T-cell (primary cell): ENCODE measurements at regions of chr11 and their contacts with region 1.

Region 1: GRCh38 chr11:128630367-128631230 is 43.2 kb upstream of the ETS1 start:
- DNase-seq: peak; percentile 71 to 97 (median 89)
- ATAC-seq: peak; percentile 73 to 84 (median 78)
- H3K4me3 ChIP-seq: no peak overlapping the region
- H3K4me3 Mint-ChIP-seq: peak overlapping the region; percentile 46 to 70 (median 53)
- H3K27ac ChIP-seq: peak overlapping the region; percentile 78
- H3K27ac Mint-ChIP-seq: peak overlapping the region; percentile 99 to 100
- H3K4me1 ChIP-seq: peaks cover 53 to 57% of the 10 kb centered on the region in 2 experiments
- H3K4me1 Mint-ChIP-seq: peaks cover 65 to 71% (median 68%) of the 10 kb centered on the region in 3 donors
- H3K27me3 ChIP-seq: no peaks in the 10 kb centered on the region
- H3K27me3 Mint-ChIP-seq: no peaks in the 10 kb centered on the region

Region 2: GRCh38 chr11:128190312-128190711 is 440.3 kb before region 1 on chr11:
- CTCF ChIA-PET with region 1: interaction called, 5 to 17 read pairs
- POLR2A ChIA-PET with region 1: no interaction called
- DNase-seq: peak in 25 of 35 experiments; percentile 4 to 74 (median 32)
- ATAC-seq: peak in 2 of 4 experiments; percentile 37 to 51
- H3K4me3 ChIP-seq: no peak overlapping the region
- H3K4me3 Mint-ChIP-seq: peak overlapping the region in 1 of 3 donors; percentile 46
- H3K27ac ChIP-seq: peak overlapping the region; percentile 3
- H3K27ac Mint-ChIP-seq: peak overlapping the region; percentile 35 to 66
- H3K4me1 ChIP-seq: peaks cover 21 to 41% of the 10 kb centered on the region in 2 experiments
- H3K4me1 Mint-ChIP-seq: peaks cover 31 to 44% (median 37%) of the 10 kb centered on the region in 3 donors
- H3K27me3 ChIP-seq: no peaks in the 10 kb centered on the region
- H3K27me3 Mint-ChIP-seq: no peaks in the 10 kb centered on the region

Region 3: DNA sequence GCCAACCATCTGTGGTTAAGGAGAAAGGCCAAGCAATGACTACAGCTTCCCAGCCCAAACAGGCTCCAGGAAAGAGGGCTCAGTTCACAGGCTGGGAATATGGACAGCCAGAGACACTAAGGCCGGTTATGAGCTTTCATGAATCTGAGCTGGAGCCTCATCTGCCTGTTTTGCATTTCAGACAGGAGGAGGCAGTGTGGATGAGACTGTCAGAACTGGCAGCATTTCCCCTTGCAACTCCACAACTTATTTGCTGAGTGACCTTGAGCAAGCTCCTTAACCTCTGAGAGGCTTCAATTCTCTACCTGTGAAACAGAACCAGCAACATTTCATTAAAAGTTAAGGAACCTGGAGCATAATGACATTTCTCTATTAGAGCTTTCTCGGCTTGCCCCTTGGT is 307.2 kb before region 1 on chr11:
- CTCF ChIA-PET with region 1: interaction called, 12 to 15 read pairs
- POLR2A ChIA-PET with region 1: interaction called in 1 of 2 experiments, 4 read pairs
- DNase-seq: peak in 25 of 35 experiments; percentile 25 to 77 (median 45)
- ATAC-seq: peak in 1 of 4 experiments; percentile 12
- H3K4me3 ChIP-seq: no peak overlapping the region
- H3K4me3 Mint-ChIP-seq: peak overlapping the region in 2 of 3 donors; percentile 37 to 71
- H3K27ac ChIP-seq: peak overlapping the region; percentile 98
- H3K27ac Mint-ChIP-seq: peak overlapping the region; percentile 97 to 99
- H3K4me1 ChIP-seq: peaks cover 74 to 83% of the 10 kb centered on the region in 2 experiments
- H3K4me1 Mint-ChIP-seq: peaks cover 87 to 92% (median 90%) of the 10 kb centered on the region in 3 donors
- H3K27me3 ChIP-seq: no peaks in the 10 kb centered on the region
- H3K27me3 Mint-ChIP-seq: no peaks in the 10 kb centered on the region

Region 4: GRCh38 chr11:128372977-128373376 is 257.6 kb before region 1 on chr11:
- CTCF ChIA-PET with region 1: no interaction called
- POLR2A ChIA-PET with region 1: no interaction called
- DNase-seq: no peak
- ATAC-seq: no peak
- H3K4me3 ChIP-seq: no peak overlapping the region
- H3K4me3 Mint-ChIP-seq: no peak overlapping the region
- H3K27ac ChIP-seq: no peak overlapping the region
- H3K27ac Mint-ChIP-seq: no peak overlapping the region
- H3K4me1 ChIP-seq: peaks cover 0 to 11% of the 10 kb centered on the region in 2 experiments
- H3K4me1 Mint-ChIP-seq: peaks cover 24 to 37% (median 29%) of the 10 kb centered on the region in 3 donors
- H3K27me3 ChIP-seq: no peaks in the 10 kb centered on the region
- H3K27me3 Mint-ChIP-seq: no peaks in the 10 kb centered on the region

Region 5: DNA sequence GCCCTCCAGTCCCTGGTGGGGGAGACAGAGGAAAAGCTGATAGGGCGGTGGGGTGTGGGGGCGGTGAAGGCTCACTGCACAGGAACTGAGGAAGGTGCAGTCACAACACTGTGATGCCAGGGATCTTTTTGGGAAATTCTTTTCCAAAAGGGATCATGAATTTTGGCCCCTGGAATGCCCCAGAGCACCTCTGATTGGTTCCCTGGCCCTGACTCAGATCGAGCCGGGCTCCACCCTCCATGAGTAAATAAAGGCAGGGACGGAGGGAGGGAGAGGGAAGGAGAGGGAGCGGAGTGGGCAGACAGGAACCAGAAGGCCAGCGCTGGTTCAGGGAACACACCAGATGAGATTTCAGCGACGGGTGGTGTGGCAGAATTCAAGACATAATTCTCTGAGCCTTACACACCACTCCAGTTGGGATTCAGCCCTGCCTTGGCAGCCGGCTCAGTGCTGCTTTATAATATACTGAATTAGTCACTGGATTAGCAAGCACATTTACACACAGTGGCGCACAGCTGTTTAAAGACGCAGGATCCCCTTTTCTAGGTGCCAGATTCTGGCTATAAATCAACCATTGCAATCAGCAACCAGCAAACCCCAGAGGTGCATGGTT is 123.5 kb before region 1 on chr11:
- CTCF ChIA-PET with region 1: interaction called, 9 to 45 read pairs
- POLR2A ChIA-PET with region 1: interaction called, 3 to 5 read pairs
- DNase-seq: peak in 12 of 35 experiments; percentile 28 to 59 (median 48)
- ATAC-seq: peak; percentile 7 to 26 (median 18)
- H3K4me3 ChIP-seq: peak overlapping the region; percentile 48 to 67
- H3K4me3 Mint-ChIP-seq: peak overlapping the region; percentile 82 to 99 (median 98)
- H3K27ac ChIP-seq: peak overlapping the region; percentile 78
- H3K27ac Mint-ChIP-seq: peak overlapping the region; percentile 96 to 98
- H3K4me1 ChIP-seq: peaks cover 85 to 88% of the 10 kb centered on the region in 2 experiments
- H3K4me1 Mint-ChIP-seq: peaks cover 97 to 100% (median 99%) of the 10 kb centered on the region in 3 donors
- H3K27me3 ChIP-seq: no peaks in the 10 kb centered on the region
- H3K27me3 Mint-ChIP-seq: no peaks in the 10 kb centered on the region

Region 6: GRCh38 chr11:128610721-128611617 is 19.6 kb before region 1 on chr11:
- CTCF ChIA-PET with region 1: interaction called, 4 to 5 read pairs
- POLR2A ChIA-PET with region 1: interaction called, 4 to 10 read pairs
- DNase-seq: peak; percentile 50 to 84 (median 68)
- ATAC-seq: peak; percentile 86 to 92 (median 88)
- H3K4me3 ChIP-seq: peak overlapping the region in 1 of 2 donors; percentile 40
- H3K4me3 Mint-ChIP-seq: peak overlapping the region; percentile 32 to 88 (median 62)
- H3K27ac ChIP-seq: peak overlapping the region; percentile 87
- H3K27ac Mint-ChIP-seq: peak overlapping the region; percentile 97 to 98
- H3K4me1 ChIP-seq: peaks cover 54 to 64% of the 10 kb centered on the region in 2 experiments
- H3K4me1 Mint-ChIP-seq: peaks cover 64 to 81% (median 75%) of the 10 kb centered on the region in 3 donors
- H3K27me3 ChIP-seq: no peaks in the 10 kb centered on the region
- H3K27me3 Mint-ChIP-seq: no peaks in the 10 kb centered on the region